Uterus (tissue), 4 donors: ENCODE measurements at regions of chr1 and their contacts with region 1.

Region 1: DNA sequence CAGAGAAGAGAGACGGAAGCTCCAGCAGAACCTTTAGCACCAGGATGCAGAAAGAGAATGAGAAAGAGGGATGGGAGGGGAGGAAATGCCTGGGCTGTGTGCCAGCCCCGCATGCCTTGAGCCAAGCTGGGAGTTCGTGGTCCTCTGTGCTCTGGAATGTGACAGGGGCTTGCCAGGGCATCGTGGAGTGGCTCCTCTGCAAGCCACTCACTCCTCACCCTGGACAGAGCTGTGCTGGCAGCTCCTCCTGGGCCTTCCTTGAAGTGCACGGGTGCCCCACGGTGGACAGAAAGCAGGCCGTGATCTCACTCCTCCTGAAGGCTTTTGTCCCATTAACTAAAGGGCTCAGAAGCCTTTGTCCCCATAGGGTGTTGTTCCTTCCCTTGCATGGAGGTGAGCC is 34.8 kb upstream of the PRELP start:
- DNase-seq: peak; percentile 81 to 86
- H3K4me3 ChIP-seq: no peak overlapping the region
- H3K27ac ChIP-seq: peak overlapping the region; percentile 88 to 89
- H3K4me1 ChIP-seq: peaks cover 14 to 22% of the 10 kb centered on the region in 2 donors
- H3K27me3 ChIP-seq: no peaks in the 10 kb centered on the region
- CTCF ChIP-seq: peak; percentile 66 to 83 (median 76)
- POLR2A ChIP-seq: no peak

Region 2: DNA sequence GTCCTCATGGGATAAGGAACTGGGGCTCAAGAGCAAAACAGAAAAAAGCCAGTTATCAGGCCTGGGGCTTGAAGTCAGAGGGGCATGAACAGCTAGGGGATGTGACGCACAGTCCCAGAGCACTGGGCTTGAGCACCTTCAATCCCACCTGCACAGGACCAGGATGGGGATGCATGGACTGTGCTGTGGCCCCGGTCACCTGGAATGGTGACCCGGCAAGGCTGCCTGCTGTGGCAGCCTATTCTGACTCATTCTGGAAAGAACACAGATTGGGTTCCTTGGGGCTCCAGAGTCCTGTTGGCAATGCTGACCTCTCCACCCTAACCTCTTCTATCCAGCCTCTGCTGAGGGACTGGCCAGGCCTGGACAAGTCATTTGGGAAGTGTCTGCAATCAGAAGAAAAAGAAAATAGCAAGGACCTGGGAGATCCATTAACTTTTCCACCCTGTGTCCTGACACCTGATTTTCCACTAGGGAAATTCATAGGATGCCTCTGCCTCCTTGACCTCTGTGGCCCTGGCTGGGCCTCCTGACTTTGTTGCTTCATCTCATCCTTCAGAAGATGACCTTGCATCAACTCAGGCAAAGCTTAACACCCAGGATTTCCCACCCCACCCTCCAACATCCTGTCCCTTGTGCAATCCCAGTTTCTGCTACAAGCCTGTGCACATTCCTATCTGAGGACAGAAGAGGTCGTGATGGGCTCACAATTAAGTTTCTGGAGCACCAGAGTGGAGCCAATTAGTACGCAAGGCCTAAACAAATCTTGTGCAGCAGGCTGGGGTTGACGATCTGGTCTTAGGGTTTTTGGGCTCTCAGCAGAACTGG is 71.9 kb before region 1 on chr1:
- intact Hi-C with region 1: loop called (anchors 2 kb)
- DNase-seq: peak; percentile 82 to 92
- H3K4me3 ChIP-seq: no peak overlapping the region
- H3K27ac ChIP-seq: peak overlapping the region; percentile 81 to 88
- H3K4me1 ChIP-seq: peaks cover 0 to 3% of the 10 kb centered on the region in 2 donors
- H3K27me3 ChIP-seq: no peaks in the 10 kb centered on the region
- CTCF ChIP-seq: peak; percentile 57 to 91 (median 75)
- POLR2A ChIP-seq: no peak

Region 3: DNA sequence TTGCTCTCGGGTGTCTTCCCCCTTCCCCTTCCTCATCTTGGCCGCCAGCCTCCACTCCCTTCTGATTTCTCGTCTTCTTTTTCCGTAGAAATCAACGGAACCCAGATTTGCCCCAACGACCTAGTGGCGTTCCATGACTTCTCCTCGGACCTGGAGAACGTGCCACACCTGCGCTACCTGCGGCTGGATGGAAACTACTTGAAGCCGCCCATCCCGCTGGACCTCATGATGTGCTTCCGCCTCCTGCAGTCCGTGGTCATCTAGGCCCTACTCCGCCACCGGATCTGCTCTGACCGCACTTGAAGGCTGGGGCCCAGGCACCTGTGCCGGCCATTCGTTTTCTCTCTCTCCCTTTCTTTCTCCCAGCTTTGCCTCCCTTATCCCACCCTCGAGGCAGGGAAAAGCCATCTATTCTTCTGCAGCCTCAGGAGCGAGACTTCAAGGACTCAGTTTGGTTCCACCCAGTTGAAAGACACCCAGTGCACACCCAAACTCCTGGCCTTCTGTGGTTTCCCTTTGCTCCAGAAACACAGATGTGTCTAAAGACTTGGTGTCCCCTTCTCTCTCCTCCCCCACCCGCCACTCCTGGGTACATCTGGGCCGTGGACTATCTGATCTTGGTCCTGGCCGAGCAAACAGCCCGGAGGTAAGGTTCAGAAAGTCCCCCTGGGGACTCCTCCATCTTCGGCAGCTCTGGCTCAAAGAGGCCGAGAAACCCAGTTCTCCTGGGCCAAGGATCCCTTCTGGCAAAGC is 46.0 kb after region 1 on chr1:
- intact Hi-C with region 1: loop called (anchors 5 kb)
- DNase-seq: peak in 1 of 2 donors; percentile 54
- H3K4me3 ChIP-seq: no peak overlapping the region
- H3K27ac ChIP-seq: peak overlapping the region; percentile 90 to 91
- H3K4me1 ChIP-seq: peaks cover 0 to 10% of the 10 kb centered on the region in 2 donors
- H3K27me3 ChIP-seq: no peaks in the 10 kb centered on the region
- CTCF ChIP-seq: no peak
- POLR2A ChIP-seq: no peak

Region 4: GRCh38 chr1:203520315-203520714 is 79.5 kb after region 1 on chr1:
- intact Hi-C with region 1: no loop called
- DNase-seq: peak in 1 of 2 donors; percentile 55
- H3K4me3 ChIP-seq: no peak overlapping the region
- H3K27ac ChIP-seq: peak overlapping the region; percentile 71 to 74
- H3K4me1 ChIP-seq: peaks cover 0 to 6% of the 10 kb centered on the region in 2 donors
- H3K27me3 ChIP-seq: no peaks in the 10 kb centered on the region
- CTCF ChIP-seq: no peak
- POLR2A ChIP-seq: peak in 1 of 2 donors; percentile 11